Prostate gland (tissue), 2 donors: ENCODE measurements at regions of chr12 and their contacts with region 1.

Region 1: DNA sequence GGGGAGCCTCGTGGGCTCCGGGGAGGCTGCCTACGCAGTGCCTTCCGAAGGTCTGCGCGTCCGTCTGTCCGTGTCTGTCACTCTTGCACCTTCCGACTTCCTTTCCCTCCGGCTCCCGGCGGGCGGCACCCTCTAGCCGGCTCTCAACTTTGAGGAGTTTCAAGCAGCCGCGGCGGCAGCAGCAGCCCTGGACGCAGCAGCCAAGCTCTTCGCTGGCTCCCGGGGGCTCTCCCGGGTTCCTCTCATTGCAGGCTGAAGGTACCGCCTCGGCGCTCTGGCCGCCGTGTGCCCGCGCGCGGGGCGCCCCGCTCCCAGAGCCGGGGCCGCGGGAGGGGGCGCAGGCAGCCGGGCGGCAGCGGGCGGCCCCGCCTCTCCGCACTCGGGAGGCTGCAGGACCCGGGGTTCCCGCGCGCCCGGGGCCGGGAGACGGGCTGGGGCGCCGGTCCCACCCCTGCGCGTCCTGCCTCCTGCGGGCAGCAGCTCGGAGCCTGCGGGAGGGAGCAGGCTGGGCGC is at the starts of genes AMIGO2 and PCED1B:
- DNase-seq: peak; percentile 67
- H3K4me3 ChIP-seq: peak within 1 kb of the TSS; percentile 57 to 61
- H3K27ac ChIP-seq: peak within 1 kb of the TSS; percentile 77 to 80
- H3K4me1 ChIP-seq: no peaks in the 10 kb centered on the region
- H3K27me3 ChIP-seq: no peaks in the 10 kb centered on the region
- CTCF ChIP-seq: peak in 3 of 4 experiments; percentile 23 to 37 (median 28)
- POLR2A ChIP-seq: peak; percentile 25
- total RNA-seq, gene AMIGO2: 6.3 to 44.9 TPM
- total RNA-seq, gene PCED1B: 0.87 to 46.9 TPM

Region 2: DNA sequence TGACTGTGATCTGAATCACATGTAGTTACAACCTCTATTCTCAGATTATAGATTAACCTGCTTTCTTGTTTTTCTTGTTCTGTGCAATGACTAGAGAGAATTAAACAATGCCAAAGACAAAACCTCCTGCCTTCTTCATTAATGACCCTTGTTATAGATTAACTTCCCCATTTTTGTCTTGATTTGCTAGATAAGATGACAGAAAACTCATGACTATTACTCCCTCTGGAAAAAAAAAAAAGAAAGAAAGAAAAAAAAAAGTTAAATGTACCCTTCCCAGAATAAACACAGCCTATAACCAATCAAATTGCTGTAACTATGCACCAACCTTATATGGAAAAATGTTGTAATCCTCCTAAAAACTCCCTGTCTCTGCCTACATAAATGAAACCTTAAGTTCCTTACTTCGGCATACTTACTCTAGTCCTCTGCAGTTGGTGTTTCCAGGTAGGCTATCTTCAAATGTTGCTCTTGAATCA is 41.2 kb before region 1 on chr12:
- intact Hi-C with region 1: loop called (anchors 5 kb)
- DNase-seq: no peak
- H3K4me3 ChIP-seq: no peak overlapping the region
- H3K27ac ChIP-seq: no peak overlapping the region
- H3K4me1 ChIP-seq: no peaks in the 10 kb centered on the region
- H3K27me3 ChIP-seq: no peaks in the 10 kb centered on the region
- CTCF ChIP-seq: no peak
- POLR2A ChIP-seq: peak; percentile 26

Region 3: GRCh38 chr12:47307680-47308399 is 228.3 kb after region 1 on chr12:
- intact Hi-C with region 1: loop called (anchors 5 kb)
- DNase-seq: peak; percentile 31
- H3K4me3 ChIP-seq: no peak overlapping the region
- H3K27ac ChIP-seq: no peak overlapping the region
- H3K4me1 ChIP-seq: no peaks in the 10 kb centered on the region
- H3K27me3 ChIP-seq: no peaks in the 10 kb centered on the region
- CTCF ChIP-seq: peak in 3 of 4 experiments; percentile 13 to 66 (median 55)
- POLR2A ChIP-seq: no peak

Region 4: DNA sequence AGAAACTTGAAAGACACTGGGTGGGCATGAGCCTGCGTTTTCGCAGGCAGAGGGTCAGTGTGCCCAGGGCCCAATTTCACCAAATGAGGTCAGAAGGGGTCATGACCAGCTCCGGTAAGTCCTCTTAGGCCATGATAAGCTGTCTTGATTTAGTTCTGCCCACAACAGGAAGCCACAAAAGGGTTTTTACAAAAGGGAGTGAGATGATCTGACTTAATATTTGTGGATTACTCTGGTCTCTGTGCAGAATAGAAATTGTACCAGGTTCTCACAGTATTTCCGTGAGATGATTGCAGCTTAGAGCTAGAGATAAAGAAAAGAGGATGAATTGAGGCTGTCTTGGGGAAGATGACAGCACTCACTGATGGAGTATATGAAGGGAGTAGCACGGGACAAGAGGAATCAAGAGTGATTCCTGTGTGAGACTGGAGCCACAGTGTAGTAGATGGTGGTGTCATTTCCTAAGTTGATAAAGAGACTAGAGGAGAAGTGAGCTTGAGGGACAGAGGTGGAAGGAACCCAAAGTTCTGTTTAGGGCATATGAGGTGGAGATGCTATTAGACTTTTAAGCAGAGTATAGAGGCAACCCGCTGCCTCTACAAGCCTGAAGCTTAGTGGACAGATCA is 288.5 kb after region 1 on chr12:
- intact Hi-C with region 1: no loop called
- DNase-seq: no peak
- H3K4me3 ChIP-seq: no peak overlapping the region
- H3K27ac ChIP-seq: no peak overlapping the region
- H3K4me1 ChIP-seq: peaks cover 4% of the 10 kb centered on the region
- H3K27me3 ChIP-seq: no peaks in the 10 kb centered on the region
- CTCF ChIP-seq: no peak
- POLR2A ChIP-seq: no peak

Region 5: GRCh38 chr12:47397664-47398281 is 318.2 kb after region 1 on chr12:
- intact Hi-C with region 1: loop called (anchors 5 kb)
- DNase-seq: peak; percentile 12
- H3K4me3 ChIP-seq: no peak overlapping the region
- H3K27ac ChIP-seq: no peak overlapping the region
- H3K4me1 ChIP-seq: no peaks in the 10 kb centered on the region
- H3K27me3 ChIP-seq: no peaks in the 10 kb centered on the region
- CTCF ChIP-seq: peak in 3 of 4 experiments; percentile 31 to 49 (median 48)
- POLR2A ChIP-seq: no peak